ENCODE measurements at regions of chr17 and their contacts with region 1.

Region 1: DNA sequence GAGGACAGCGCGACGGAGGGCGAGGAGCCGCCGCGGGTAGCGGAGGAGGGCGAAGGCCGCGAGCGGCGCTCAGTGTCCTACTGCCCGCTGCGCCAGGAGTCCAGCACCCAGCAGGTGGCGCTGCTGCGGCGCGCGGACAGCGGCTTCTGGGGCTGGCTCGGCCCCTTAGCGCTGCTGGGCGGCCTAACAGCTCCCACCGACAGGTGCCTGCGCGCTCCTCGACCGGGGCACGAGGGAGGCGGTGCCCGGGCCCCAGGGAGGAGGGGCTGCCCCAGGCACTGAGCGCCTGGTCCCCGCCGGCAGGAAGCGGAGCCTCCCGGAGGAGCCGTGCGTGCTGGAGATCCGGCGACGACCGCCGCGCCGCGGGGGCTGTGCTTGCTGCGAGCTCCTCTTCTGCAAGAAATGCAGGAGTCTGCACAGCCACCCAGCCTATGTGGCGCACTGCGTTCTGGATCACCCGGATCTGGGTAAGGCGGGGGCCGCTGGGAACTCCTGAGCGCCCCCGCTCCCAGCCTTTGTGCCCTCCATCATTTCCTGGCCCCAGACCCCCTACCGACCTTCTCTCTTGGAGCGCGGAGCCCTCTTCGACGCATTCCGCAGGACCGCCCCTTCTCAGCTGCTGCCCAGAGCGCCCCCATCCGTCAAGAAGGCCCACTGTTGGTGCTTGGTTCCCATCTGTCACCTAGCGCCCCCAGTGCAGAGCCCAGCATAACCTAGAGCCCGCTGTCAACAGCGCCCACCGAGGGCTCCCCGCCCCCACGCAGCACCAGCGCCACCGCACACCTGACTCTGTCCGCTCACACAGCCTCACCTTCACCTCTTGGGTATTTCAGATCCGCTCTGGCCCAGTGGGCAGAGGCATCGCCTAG is 3.7 kb downstream of the C17orf50 start:
- DNase-seq: peak; percentile 96 to 98
- ATAC-seq: peak; percentile 94 to 95
- H3K4me3 ChIP-seq: peak overlapping the region; percentile 65
- H3K27ac ChIP-seq: peak overlapping the region; percentile 82 to 87
- H3K4me1 ChIP-seq: no peaks in the 10 kb centered on the region
- CTCF ChIP-seq: peak; percentile 94
- EP300 ChIP-seq: no peak
- POLR2A ChIP-seq: no peak; the same call in none of the 2 replicates
- RAD21 ChIP-seq: peak; percentile 85 to 96

Region 2: GRCh38 chr17:35467824-35468223 is 296.5 kb before region 1 on chr17:
- CTCF ChIA-PET with region 1: no interaction called
- POLR2A ChIA-PET with region 1: no interaction called
- DNase-seq: no peak
- ATAC-seq: no peak
- H3K4me3 ChIP-seq: no peak overlapping the region
- H3K27ac ChIP-seq: no peak overlapping the region
- H3K4me1 ChIP-seq: no peaks in the 10 kb centered on the region
- CTCF ChIP-seq: no peak
- EP300 ChIP-seq: no peak
- POLR2A ChIP-seq: no peak
- RAD21 ChIP-seq: no peak

Region 3: DNA sequence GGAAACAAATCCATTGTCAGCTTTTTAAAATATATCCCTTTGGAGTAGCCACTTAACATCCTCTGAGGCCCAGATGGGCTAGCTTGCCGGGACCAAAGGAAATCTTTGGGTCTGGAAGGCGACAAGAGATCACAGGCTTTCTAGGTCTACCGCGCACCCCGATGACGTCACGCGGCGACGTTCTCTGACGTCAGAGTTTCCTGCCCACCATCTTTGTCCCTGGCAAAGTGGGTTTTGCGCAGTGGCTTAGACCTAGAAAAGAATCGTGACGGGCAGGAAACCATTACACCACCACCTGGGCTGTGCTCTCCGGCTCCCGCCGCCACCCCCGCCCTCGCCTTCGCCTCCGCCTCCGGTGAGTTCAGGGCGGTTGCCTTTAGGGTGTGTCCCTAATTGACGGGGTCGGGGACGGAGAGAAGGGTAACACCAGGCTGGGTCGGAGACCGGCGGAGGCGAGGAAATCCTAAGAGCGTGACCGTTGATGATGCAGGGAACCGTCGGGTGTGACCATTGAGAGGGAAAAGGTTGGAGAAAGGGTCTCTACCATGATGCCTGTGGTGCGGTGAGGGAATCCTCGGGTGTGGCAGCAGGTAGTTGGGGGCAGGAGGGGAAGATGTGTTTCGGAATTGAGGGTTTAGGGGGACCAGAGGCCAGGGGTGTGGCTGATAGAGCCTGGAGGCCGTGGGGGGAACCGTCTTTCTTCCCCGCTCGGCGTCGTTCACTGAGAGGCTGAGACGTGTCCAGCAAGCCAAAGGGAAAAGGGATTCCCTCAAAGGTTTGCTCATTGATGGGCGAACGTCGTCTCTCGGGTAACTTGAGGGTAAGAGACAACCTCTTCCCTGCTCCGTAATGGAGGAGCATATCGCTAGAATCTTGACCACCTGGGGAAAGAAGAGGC is 177.0 kb before region 1 on chr17 and contains the start of gene AP2B1:
- CTCF ChIA-PET with region 1: interaction called, 11 read pairs
- POLR2A ChIA-PET with region 1: interaction called, 3 read pairs
- DNase-seq: peak; percentile 95 to 99
- ATAC-seq: peak; percentile 88 to 91
- H3K4me3 ChIP-seq: peak within 1 kb of the TSS; percentile 73
- H3K27ac ChIP-seq: peak within 1 kb of the TSS; percentile 91 to 94
- H3K4me1 ChIP-seq: peaks cover 39% of the 10 kb centered on the region
- CTCF ChIP-seq: no peak
- EP300 ChIP-seq: no peak
- POLR2A ChIP-seq: peak; percentile 76
- RAD21 ChIP-seq: no peak
- polyA plus RNA-seq, gene AP2B1: 278 and 309 TPM in 2 replicates

Region 4: GRCh38 chr17:35641032-35641431 is 123.3 kb before region 1 on chr17:
- CTCF ChIA-PET with region 1: interaction called, 16 read pairs
- POLR2A ChIA-PET with region 1: no interaction called
- DNase-seq: no peak
- ATAC-seq: no peak
- H3K4me3 ChIP-seq: no peak overlapping the region
- H3K27ac ChIP-seq: no peak overlapping the region
- H3K4me1 ChIP-seq: no peaks in the 10 kb centered on the region
- CTCF ChIP-seq: no peak
- EP300 ChIP-seq: no peak
- POLR2A ChIP-seq: no peak
- RAD21 ChIP-seq: no peak

Region 5: DNA sequence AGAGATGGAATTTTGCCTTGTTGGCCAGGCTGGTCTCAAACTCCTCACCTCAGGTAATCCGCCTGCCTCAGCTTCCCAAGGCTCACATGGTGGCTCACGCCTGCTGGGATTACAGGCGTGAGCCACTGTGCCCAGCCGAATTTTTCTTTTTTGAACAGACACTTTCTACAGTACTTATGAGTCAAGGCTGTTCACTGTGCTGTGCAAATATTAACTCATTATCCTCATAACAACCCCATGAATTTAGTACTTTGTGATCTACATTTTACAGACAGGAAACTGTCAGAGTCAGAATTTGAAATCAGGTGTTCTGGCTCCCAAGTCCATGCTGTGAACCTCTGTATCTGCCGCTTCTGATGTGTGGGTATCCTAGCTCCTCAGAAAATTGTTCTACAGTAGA is 58.7 kb before region 1 on chr17:
- CTCF ChIA-PET with region 1: interaction called, 14 read pairs
- POLR2A ChIA-PET with region 1: no interaction called
- DNase-seq: no peak
- ATAC-seq: peak; percentile 28 to 64; a peak in 4 of 6 replicates
- H3K4me3 ChIP-seq: no peak overlapping the region
- H3K27ac ChIP-seq: no peak overlapping the region; a peak in 2 of 6 replicates
- H3K4me1 ChIP-seq: peaks cover 31% of the 10 kb centered on the region
- CTCF ChIP-seq: no peak
- EP300 ChIP-seq: no peak
- POLR2A ChIP-seq: no peak
- RAD21 ChIP-seq: no peak

Region 6: GRCh38 chr17:35808962-35809854 is 44.9 kb after region 1 on chr17 and contains the start of gene TAF15:
- CTCF ChIA-PET with region 1: interaction called, 2,039 read pairs
- POLR2A ChIA-PET with region 1: interaction called, 156 read pairs
- DNase-seq: peak; percentile 95 to 99
- ATAC-seq: peak; percentile 91 to 96
- H3K4me3 ChIP-seq: peak within 1 kb of the TSS; percentile 58
- H3K27ac ChIP-seq: peak within 1 kb of the TSS; percentile 86 to 97
- H3K4me1 ChIP-seq: peaks cover 34% of the 10 kb centered on the region
- CTCF ChIP-seq: peak; percentile 82
- EP300 ChIP-seq: no peak
- POLR2A ChIP-seq: peak; percentile 98
- RAD21 ChIP-seq: peak; percentile 47 to 61; a peak in 3 of 5 replicates
- polyA plus RNA-seq, gene TAF15: 130 and 213 TPM in 2 replicates

Region 7: DNA sequence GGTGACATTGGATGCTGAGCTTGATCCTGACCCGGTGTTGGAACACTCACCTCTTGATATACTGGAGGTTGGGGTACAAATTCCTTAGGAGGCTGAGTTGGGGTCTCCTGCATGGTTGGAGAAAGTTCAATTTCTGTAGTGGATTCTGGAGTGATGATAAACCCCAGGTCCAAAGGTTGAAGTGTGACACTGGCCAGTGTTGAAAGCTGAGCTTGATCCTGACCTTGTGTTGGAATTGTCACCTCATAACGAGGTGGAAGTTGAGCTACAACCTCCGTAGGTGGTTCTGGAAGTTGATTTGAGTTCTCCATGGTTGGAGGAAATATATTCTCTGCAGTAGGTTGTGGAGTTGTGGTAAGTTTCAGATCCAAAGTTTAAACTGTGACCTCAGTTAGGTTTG is 145.1 kb after region 1 on chr17:
- CTCF ChIA-PET with region 1: interaction called, 12 read pairs
- POLR2A ChIA-PET with region 1: no interaction called
- DNase-seq: no peak
- ATAC-seq: no peak
- H3K4me3 ChIP-seq: no peak overlapping the region
- H3K27ac ChIP-seq: no peak overlapping the region
- H3K4me1 ChIP-seq: no peaks in the 10 kb centered on the region
- CTCF ChIP-seq: no peak
- EP300 ChIP-seq: no peak
- POLR2A ChIP-seq: no peak
- RAD21 ChIP-seq: no peak